Dorsolateral prefrontal cortex (tissue), 120 donors: ENCODE measurements at regions of chr20 and their contacts with region 1.

Region 1: DNA sequence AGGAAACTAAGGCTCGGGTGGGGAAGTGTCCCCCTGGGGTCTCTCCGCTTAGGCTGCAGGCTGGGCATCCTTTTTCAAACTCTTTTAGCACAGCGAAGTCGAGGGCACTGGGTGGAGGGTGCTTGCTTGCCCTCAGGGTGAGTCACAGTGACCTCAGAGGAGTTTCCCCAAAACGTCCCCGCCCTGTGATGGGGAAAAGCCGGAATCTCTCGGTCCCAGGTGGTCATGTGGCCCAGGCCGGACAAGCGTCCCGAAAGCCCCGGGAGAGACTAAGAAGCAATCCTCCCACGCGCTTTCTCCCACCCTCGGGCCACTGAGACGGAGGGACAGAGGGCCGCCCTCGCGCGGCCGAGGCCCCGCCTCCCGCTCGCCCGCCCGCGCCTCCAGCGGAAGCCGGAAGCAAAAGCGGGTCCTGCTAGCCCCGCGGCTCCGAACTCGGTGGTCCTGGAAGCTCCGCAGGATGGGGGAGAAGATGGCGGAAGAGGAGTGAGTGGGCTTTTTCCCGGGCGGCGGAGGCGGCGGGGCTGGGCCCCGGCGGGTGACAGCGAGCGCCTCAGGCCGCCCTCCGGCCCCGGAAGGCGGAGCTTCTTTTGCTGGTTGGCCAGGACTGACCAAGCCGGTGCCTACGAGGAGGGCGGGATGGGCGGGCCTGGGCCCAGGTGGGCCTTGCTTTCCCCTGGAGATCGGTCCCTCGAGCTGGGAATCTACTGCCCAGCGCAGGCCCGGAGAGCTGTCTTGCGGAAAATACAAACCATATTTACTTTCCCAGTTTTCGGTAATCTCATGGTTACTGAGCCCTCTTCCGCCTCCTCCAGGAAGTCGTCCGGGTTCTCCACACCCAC is at the start of gene SLC9A8:
- DNase-seq: peak; percentile 77 to 94 (median 92)
- H3K4me3 ChIP-seq: peak within 1 kb of the TSS; percentile 50 to 99 (median 89)
- H3K27ac ChIP-seq: peak within 1 kb of the TSS; percentile 52 to 97 (median 91)
- H3K27me3 ChIP-seq: no peaks in the 10 kb centered on the region
- CTCF ChIP-seq: peak in 54 of 56 donors; percentile 10 to 75 (median 54)
- total RNA-seq, gene SLC9A8: 8.7 to 21.9 (median 14.9) TPM

Region 2: DNA sequence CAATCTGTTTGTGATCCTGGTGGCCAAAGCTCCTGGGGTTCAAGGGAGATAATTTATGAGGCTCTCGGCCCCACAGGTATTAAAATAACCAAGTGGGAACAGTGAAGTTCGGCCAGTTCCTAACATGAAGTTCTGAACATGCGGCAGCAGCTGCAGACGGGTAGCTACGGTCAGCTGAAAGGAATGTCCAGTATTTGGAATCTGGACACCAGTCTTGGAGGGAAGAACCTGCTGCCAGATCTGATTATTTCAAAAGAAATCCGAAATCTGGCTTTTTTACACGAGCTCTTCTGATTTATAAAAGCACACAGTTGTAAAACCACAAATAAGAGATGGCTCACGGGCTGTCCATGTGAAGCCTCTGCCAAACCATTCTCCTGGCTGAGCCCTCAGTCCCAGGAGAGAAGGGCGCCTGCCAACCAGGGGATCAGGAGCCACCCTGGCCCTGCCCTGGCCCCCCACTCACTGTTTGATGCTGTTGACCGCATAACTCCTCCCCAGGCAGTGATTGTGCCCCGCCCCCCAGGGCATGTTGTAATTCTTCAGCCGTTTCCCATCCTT is 302.0 kb before region 1 on chr20:
- intact Hi-C with region 1: no loop called
- DNase-seq: no peak
- H3K4me3 ChIP-seq: no peak overlapping the region
- H3K27ac ChIP-seq: no peak overlapping the region
- H3K27me3 ChIP-seq: peaks cover 0 to 7% (median 0%) of the 10 kb centered on the region in 45 donors
- CTCF ChIP-seq: no peak

Region 3: DNA sequence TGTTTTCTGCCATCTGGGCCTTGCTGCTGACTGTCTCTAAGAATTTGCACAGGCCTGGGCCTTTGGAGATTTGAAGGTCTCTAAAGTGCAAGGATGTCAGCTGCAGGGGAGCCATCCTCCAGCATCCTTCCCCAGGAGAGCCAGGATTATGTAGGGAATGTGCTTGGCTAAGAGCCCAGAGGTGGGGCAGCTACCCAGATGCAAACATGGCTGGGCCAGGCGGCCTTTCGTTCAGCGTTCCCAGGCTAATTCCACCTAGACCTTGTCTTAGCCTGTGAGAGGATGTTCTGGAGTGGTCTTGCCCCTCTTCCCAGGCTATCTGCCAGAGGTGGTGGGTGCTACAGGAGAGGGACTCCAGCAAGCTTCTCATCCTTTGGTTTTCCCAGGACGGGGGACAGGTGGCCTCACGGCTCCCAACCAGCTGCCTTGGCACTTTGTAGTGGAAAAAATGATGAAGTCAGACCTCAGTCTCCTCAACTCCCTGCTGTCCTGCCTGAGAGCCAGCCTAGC is 237.1 kb before region 1 on chr20:
- intact Hi-C with region 1: no loop called
- DNase-seq: no peak
- H3K4me3 ChIP-seq: no peak overlapping the region
- H3K27ac ChIP-seq: peak overlapping the region in 3 of 59 donors; percentile 15 to 47 (median 40)
- H3K27me3 ChIP-seq: peaks cover 0 to 12% (median 0%) of the 10 kb centered on the region in 45 donors
- CTCF ChIP-seq: no peak

Region 4: GRCh38 chr20:49685809-49686208 is 126.9 kb before region 1 on chr20:
- intact Hi-C with region 1: no loop called
- DNase-seq: no peak
- H3K4me3 ChIP-seq: peak overlapping the region in 13 of 59 donors; percentile 0 to 37 (median 15)
- H3K27ac ChIP-seq: peak overlapping the region in 56 of 59 donors; percentile 5 to 83 (median 66)
- H3K27me3 ChIP-seq: no peaks in the 10 kb centered on the region
- CTCF ChIP-seq: no peak

Region 5: DNA sequence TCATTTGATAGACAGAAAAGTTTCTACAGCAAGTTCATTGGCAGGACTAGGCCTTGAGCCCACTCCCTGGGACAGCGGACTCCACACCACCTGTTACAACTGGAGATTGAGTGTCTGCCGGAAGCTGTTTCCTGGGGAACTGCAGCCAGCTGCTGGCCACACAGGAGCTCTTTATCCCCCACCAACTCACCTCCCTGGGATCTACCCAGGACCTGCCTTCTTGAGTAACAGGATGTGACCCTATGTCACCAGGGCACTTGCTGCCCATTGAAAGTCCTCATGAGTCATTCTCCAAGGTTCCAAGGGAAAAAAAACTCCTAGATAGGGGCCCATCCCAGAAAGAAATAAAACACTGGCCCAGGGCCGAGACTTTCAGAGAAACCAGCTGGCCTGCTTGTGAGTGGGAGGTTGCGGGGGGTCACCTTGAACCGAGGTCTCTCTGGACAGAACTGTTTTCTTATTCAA is 37.4 kb before region 1 on chr20:
- intact Hi-C with region 1: loop called in 1 of 2 experiments (anchors 5 kb)
- DNase-seq: no peak
- H3K4me3 ChIP-seq: no peak overlapping the region
- H3K27ac ChIP-seq: peak overlapping the region in 14 of 59 donors; percentile 10 to 59 (median 24)
- H3K27me3 ChIP-seq: no peaks in the 10 kb centered on the region
- CTCF ChIP-seq: no peak